Activated CD4-positive, alpha-beta memory T cell treated with anti-CD3 and anti-CD28 coated beads, Interleukin-2, amount 10 ng/mL, durations not matched to agents 7 days and 5 days (primary cell): ENCODE measurements at regions of chr6 and their contacts with region 1.

Region 1: GRCh38 chr6:20319520-20320357 is 81.9 kb upstream of the E2F3 start:
- DNase-seq: peak; percentile 85
- H3K4me3 Mint-ChIP-seq: peak overlapping the region; percentile 81
- H3K27ac Mint-ChIP-seq: peak overlapping the region; percentile 99
- H3K4me1 Mint-ChIP-seq: peaks cover 21% of the 10 kb centered on the region
- H3K27me3 Mint-ChIP-seq: peaks cover 4% of the 10 kb centered on the region

Region 2: GRCh38 chr6:20334334-20334733 is 14.6 kb after region 1 on chr6:
- CTCF ChIA-PET with region 1: interaction called, 6 read pairs
- POLR2A ChIA-PET with region 1: interaction called, 64 read pairs
- DNase-seq: no peak
- H3K4me3 Mint-ChIP-seq: no peak overlapping the region
- H3K27ac Mint-ChIP-seq: no peak overlapping the region
- H3K4me1 Mint-ChIP-seq: peaks cover 24% of the 10 kb centered on the region
- H3K27me3 Mint-ChIP-seq: peaks cover 4% of the 10 kb centered on the region

Region 3: GRCh38 chr6:20366091-20366832 is 46.5 kb after region 1 on chr6:
- CTCF ChIA-PET with region 1: interaction called, 15 read pairs
- POLR2A ChIA-PET with region 1: interaction called, 134 read pairs
- DNase-seq: peak; percentile 49
- H3K4me3 Mint-ChIP-seq: peak overlapping the region; percentile 63
- H3K27ac Mint-ChIP-seq: peak overlapping the region; percentile 98
- H3K4me1 Mint-ChIP-seq: peaks cover 58% of the 10 kb centered on the region
- H3K27me3 Mint-ChIP-seq: no peaks in the 10 kb centered on the region

Region 4: GRCh38 chr6:20393297-20393696 is 73.6 kb after region 1 on chr6:
- CTCF ChIA-PET with region 1: interaction called, 3 read pairs
- POLR2A ChIA-PET with region 1: interaction called, 13 read pairs
- DNase-seq: no peak
- H3K4me3 Mint-ChIP-seq: no peak overlapping the region
- H3K27ac Mint-ChIP-seq: no peak overlapping the region
- H3K4me1 Mint-ChIP-seq: peaks cover 2% of the 10 kb centered on the region
- H3K27me3 Mint-ChIP-seq: peaks cover 6% of the 10 kb centered on the region

Region 5: GRCh38 chr6:20409427-20409971 is 89.8 kb after region 1 on chr6:
- CTCF ChIA-PET with region 1: interaction called, 21 read pairs
- POLR2A ChIA-PET with region 1: interaction called, 171 read pairs
- DNase-seq: peak; percentile 32
- H3K4me3 Mint-ChIP-seq: peak overlapping the region; percentile 49
- H3K27ac Mint-ChIP-seq: peak overlapping the region; percentile 82
- H3K4me1 Mint-ChIP-seq: peaks cover 85% of the 10 kb centered on the region
- H3K27me3 Mint-ChIP-seq: no peaks in the 10 kb centered on the region

Region 6: GRCh38 chr6:21064756-21065340 is 745.1 kb after region 1 on chr6:
- CTCF ChIA-PET with region 1: no interaction called
- POLR2A ChIA-PET with region 1: no interaction called
- DNase-seq: no peak
- H3K4me3 Mint-ChIP-seq: no peak overlapping the region
- H3K27ac Mint-ChIP-seq: no peak overlapping the region
- H3K4me1 Mint-ChIP-seq: peaks cover 2% of the 10 kb centered on the region
- H3K27me3 Mint-ChIP-seq: no peaks in the 10 kb centered on the region